CD8-positive, alpha-beta T cell (primary cell): ENCODE measurements at regions of chr2 and their contacts with region 1.

Region 1: DNA sequence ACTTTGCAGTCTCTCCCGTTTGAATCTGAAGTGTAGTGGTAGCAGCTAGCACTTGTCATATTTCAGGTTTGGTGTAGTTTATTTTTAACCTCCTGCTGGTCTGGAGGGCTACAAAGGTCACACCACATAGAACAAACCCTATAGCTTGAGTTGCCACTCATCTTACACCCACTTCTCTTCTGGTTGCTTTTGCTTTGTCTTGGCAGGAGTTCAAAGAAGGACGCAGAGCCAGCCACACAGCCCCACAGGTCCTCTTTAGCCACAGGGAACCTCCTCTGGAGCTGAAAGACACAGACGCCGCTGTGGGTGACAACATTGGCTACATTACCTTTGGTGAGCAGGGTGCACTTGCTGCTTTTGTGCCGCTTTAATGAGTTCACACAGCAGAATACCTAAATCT is 15.6 kb upstream of the GPBAR1 start:
- DNase-seq: peak in 1 of 9 experiments; percentile 33
- ATAC-seq: peak; percentile 44
- H3K4me3 ChIP-seq: no peak overlapping the region
- H3K4me3 Mint-ChIP-seq: no peak overlapping the region
- H3K27ac ChIP-seq: peak overlapping the region in 1 of 2 experiments; percentile 23
- H3K27ac Mint-ChIP-seq: peak overlapping the region; percentile 63
- H3K4me1 ChIP-seq: peaks cover 35% of the 10 kb centered on the region
- H3K4me1 Mint-ChIP-seq: peaks cover 41% of the 10 kb centered on the region
- H3K27me3 ChIP-seq: no peaks in the 10 kb centered on the region
- H3K27me3 Mint-ChIP-seq: no peaks in the 10 kb centered on the region
- CTCF ChIP-seq: no peak

Region 2: GRCh38 chr2:218229239-218229638 is 16.0 kb before region 1 on chr2:
- CTCF ChIA-PET with region 1: interaction called, 6 read pairs
- POLR2A ChIA-PET with region 1: no interaction called
- intact Hi-C with region 1: loop called in 1 of 2 experiments (anchors 2 kb)
- DNase-seq: peak in 7 of 9 experiments; percentile 36 to 81 (median 49)
- ATAC-seq: peak; percentile 79
- H3K4me3 ChIP-seq: no peak overlapping the region
- H3K4me3 Mint-ChIP-seq: peak overlapping the region; percentile 44
- H3K27ac ChIP-seq: peak overlapping the region in 1 of 2 experiments; percentile 63
- H3K27ac Mint-ChIP-seq: peak overlapping the region; percentile 89
- H3K4me1 ChIP-seq: peaks cover 66% of the 10 kb centered on the region
- H3K4me1 Mint-ChIP-seq: peaks cover 78% of the 10 kb centered on the region
- H3K27me3 ChIP-seq: no peaks in the 10 kb centered on the region
- H3K27me3 Mint-ChIP-seq: no peaks in the 10 kb centered on the region
- CTCF ChIP-seq: no peak

Region 3: DNA sequence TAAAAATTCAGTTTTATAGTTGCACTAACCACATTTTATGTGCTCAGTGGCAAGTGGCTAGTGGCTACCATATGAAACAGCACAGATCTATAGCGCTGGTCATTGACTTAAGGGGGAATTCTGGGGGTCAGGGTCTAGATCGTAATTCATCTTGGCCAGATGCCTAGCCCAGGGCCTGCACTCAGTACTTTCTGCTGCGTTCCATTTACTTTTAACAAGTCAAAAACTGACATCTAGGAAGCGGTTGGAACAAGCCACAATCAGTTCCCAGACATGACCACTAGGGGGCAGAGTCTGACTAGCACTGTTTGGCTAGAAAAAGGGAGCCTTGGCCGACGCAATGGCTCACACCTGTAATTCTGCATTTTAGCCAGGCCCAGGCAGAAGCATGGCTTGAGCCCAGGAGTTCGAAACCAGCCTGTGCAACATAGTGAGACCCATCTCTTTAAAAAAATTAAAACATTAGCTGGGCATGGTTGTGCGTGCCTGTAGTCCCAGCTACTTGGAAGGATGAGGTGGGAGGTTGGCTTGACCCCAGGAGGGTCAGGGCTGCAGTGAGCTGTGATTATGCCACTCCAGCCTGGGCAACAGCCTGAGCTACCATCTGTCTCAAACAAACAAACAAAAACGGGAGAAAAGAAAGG is 56.1 kb after region 1 on chr2:
- CTCF ChIA-PET with region 1: no interaction called
- POLR2A ChIA-PET with region 1: no interaction called
- intact Hi-C with region 1: no loop called
- DNase-seq: peak; percentile 78 to 93 (median 89)
- ATAC-seq: peak; percentile 98
- H3K4me3 ChIP-seq: no peak overlapping the region
- H3K4me3 Mint-ChIP-seq: no peak overlapping the region
- H3K27ac ChIP-seq: no peak overlapping the region
- H3K27ac Mint-ChIP-seq: no peak overlapping the region
- H3K4me1 ChIP-seq: no peaks in the 10 kb centered on the region
- H3K4me1 Mint-ChIP-seq: peaks cover 6% of the 10 kb centered on the region
- H3K27me3 ChIP-seq: no peaks in the 10 kb centered on the region
- H3K27me3 Mint-ChIP-seq: no peaks in the 10 kb centered on the region
- CTCF ChIP-seq: peak; percentile 83